Spleen (tissue), 13 donors: ENCODE measurements at regions of chr6 and their contacts with region 1.

Region 1: GRCh38 chr6:152863618-152864326 is 113.2 kb downstream of the VIP start:
- DNase-seq: no peak
- H3K4me3 ChIP-seq: no peak overlapping the region
- H3K27ac ChIP-seq: no peak overlapping the region
- H3K4me1 ChIP-seq: no peaks in the 10 kb centered on the region
- H3K27me3 ChIP-seq: no peaks in the 10 kb centered on the region
- CTCF ChIP-seq: peak in 10 of 11 experiments; percentile 27 to 73 (median 64)
- POLR2A ChIP-seq: no peak

Region 2: DNA sequence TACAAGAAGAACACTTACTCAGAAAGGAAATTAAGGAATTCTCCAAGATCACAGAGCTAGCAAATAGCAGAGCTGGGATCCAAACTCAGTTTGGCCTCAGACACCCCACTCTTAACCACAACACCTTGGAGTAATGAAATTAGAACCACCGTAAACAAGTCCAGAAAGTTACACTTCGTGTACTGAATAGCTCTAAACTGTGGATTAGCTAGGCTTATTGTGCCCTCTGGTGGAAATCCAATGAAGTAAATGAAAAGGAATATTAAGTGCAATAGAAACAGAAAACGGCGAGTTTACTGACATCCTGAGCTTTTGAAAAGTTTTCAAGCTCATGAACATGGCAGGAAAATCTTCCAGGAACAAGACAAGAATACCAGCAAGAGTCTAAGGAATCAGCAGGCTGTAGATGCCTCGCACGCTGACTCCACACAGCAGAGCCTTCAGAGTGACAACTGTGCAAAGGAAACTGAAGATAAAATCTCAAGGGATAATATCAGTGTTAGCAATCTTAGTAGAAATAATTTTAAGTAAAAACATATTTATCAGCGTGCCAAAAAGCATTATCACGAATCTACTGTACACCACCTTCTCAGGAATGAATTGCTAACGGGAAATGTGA is 84.5 kb after region 1 on chr6:
- intact Hi-C with region 1: loop called (anchors 5 kb)
- DNase-seq: no peak
- H3K4me3 ChIP-seq: peak overlapping the region in 1 of 8 donors; percentile 23
- H3K27ac ChIP-seq: no peak overlapping the region
- H3K4me1 ChIP-seq: peaks cover 0 to 12% (median 7%) of the 10 kb centered on the region in 6 donors
- H3K27me3 ChIP-seq: peaks cover 0 to 18% (median 0%) of the 10 kb centered on the region in 7 donors
- CTCF ChIP-seq: peak in 10 of 11 experiments; percentile 29 to 70 (median 59)
- POLR2A ChIP-seq: no peak

Region 3: GRCh38 chr6:152959333-152959732 is 95.6 kb after region 1 on chr6:
- intact Hi-C with region 1: no loop called
- DNase-seq: no peak
- H3K4me3 ChIP-seq: no peak overlapping the region
- H3K27ac ChIP-seq: no peak overlapping the region
- H3K4me1 ChIP-seq: no peaks in the 10 kb centered on the region
- H3K27me3 ChIP-seq: peaks cover 0 to 6% (median 0%) of the 10 kb centered on the region in 7 donors
- CTCF ChIP-seq: no peak
- POLR2A ChIP-seq: no peak

Region 4: DNA sequence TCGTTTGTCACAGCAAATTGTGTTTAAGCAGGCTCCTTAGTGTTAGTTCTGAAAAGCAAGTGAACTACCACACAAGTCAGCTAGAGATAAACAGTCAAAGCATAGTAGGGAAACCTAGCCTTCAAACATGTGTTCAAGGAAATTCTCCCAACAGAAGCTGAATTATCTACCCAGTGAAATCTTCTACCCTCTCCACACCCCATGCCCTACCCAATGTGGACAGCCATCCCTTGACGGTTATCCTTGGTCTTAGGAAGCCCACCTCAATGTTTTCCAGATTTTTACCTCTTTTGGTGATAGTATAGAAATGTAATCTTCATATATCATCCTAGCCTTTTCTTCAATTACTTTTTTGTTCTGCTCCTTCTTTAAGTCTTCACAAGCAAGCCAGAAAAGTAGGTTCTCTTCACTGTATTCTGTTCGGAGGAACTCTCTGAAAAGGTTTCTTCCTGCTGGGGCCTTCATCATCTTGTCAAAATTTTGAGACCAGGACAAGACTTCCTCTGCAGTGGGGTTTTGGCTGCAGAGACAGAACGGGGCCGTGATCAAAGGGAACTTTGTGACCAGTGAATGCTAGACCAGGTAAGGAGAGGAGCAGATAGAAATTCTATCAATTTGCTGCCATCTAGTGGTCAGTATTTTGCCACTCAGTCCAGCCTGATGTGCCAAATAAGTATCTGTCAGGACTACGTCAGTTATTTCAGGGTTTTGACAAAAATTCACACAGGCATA is 160.4 kb after region 1 on chr6:
- intact Hi-C with region 1: loop called (anchors 10 kb)
- DNase-seq: no peak
- H3K4me3 ChIP-seq: no peak overlapping the region
- H3K27ac ChIP-seq: no peak overlapping the region
- H3K4me1 ChIP-seq: peaks cover 0 to 7% (median 6%) of the 10 kb centered on the region in 6 donors
- H3K27me3 ChIP-seq: peaks cover 0 to 5% (median 0%) of the 10 kb centered on the region in 7 donors
- CTCF ChIP-seq: peak; percentile 60 to 85 (median 81)
- POLR2A ChIP-seq: no peak